ENCODE measurements at regions of chr1 and their contacts with region 1.

Region 1: GRCh38 chr1:2545759-2546514 is 10.2 kb upstream of the TNFRSF14 start:
- DNase-seq: peak; percentile 80
- ATAC-seq: peak; percentile 61
- H3K4me3 ChIP-seq: peak overlapping the region; percentile 82; the same call in 1 of the 2 replicates
- H3K27ac ChIP-seq: peak overlapping the region; percentile 96
- H3K4me1 ChIP-seq: peaks cover 31% of the 10 kb centered on the region
- H3K27me3 ChIP-seq: no peaks in the 10 kb centered on the region
- CTCF ChIP-seq: no peak
- EP300 ChIP-seq: no peak
- POLR2A ChIP-seq: peak; percentile 96
- RAD21 ChIP-seq: no peak

Region 2: DNA sequence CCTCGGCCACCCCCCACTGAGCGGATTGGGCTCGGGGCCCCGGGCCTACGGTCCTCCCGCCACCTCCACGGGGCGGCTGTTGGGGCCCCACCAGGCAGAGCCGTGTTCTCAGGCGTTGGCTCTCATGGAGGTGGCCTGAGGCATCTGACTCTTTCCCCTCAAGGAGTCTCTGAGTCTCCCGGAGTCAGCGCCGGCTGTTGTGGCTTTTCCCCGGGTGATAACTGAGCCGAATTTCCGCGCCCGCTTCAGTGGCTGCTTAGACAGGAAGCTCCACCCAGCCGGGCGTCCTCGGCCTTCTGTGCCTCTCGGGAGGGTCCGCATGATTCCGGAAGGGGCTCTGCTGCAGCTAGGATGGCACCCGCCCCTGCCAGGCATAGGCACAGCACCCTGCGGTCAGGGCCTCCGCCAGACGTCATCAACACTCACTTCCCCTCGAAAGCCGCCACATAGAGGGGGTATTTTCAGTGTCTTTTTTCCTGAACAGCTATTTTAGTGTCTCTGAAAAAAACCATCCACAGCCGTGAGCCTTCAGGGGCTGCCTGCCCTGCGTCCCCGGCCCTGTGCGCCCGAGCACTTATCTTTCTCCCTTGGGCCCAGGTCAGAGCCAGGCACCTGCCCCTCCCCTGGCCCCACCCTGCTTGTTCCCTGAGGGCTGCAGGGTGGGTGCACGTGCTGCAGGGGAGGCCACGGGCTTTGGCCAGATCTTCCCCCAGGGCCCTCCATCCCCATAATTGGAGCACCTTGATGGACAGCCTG is 244.9 kb before region 1 on chr1:
- CTCF ChIA-PET with region 1: no interaction called
- POLR2A ChIA-PET with region 1: no interaction called
- RAD21 ChIA-PET with region 1: interaction called, 3 read pairs
- SMC1A ChIA-PET with region 1: no interaction called
- in situ Hi-C with region 1: no loop called
- intact Hi-C with region 1: loop called (anchors 10 kb)
- DNase-seq: peak; percentile 76
- ATAC-seq: peak; percentile 89
- H3K4me3 ChIP-seq: peak overlapping the region; percentile 71
- H3K27ac ChIP-seq: peak overlapping the region; percentile 91
- H3K4me1 ChIP-seq: peaks cover 28% of the 10 kb centered on the region
- H3K27me3 ChIP-seq: no peaks in the 10 kb centered on the region
- CTCF ChIP-seq: no peak
- EP300 ChIP-seq: peak; percentile 81 to 84; a peak in 3 of 4 replicates
- POLR2A ChIP-seq: peak; percentile 47; the same call in 1 of the 2 replicates
- RAD21 ChIP-seq: no peak

Region 3: GRCh38 chr1:2412519-2413233 is 133.3 kb before region 1 on chr1 and contains the start of gene PEX10:
- CTCF ChIA-PET with region 1: interaction called, 37 read pairs
- POLR2A ChIA-PET with region 1: interaction called, 18 read pairs
- RAD21 ChIA-PET with region 1: interaction called, 46 read pairs
- SMC1A ChIA-PET with region 1: interaction called, 21 read pairs
- in situ Hi-C with region 1: loop called (anchors 5 kb)
- intact Hi-C with region 1: loop called (anchors 1 kb)
- DNase-seq: peak; percentile 80
- ATAC-seq: peak; percentile 88
- H3K4me3 ChIP-seq: peak within 1 kb of the TSS; percentile 98
- H3K27ac ChIP-seq: peak within 1 kb of the TSS; percentile 62
- H3K4me1 ChIP-seq: peaks cover 27% of the 10 kb centered on the region
- H3K27me3 ChIP-seq: no peaks in the 10 kb centered on the region
- CTCF ChIP-seq: no peak
- EP300 ChIP-seq: no peak
- POLR2A ChIP-seq: peak; percentile 87
- RAD21 ChIP-seq: no peak
- polyA plus RNA-seq, gene PEX10: 0.24 TPM in 1 of 2 experiments, not detected in the other

Region 4: GRCh38 chr1:2556277-2556677 is 10.3 kb after region 1 on chr1 and contains the start of gene TNFRSF14:
- CTCF ChIA-PET with region 1: interaction called, 8 read pairs
- POLR2A ChIA-PET with region 1: interaction called, 23 read pairs
- RAD21 ChIA-PET with region 1: interaction called, 20 read pairs
- SMC1A ChIA-PET with region 1: interaction called, 7 read pairs
- in situ Hi-C with region 1: no loop called
- intact Hi-C with region 1: no loop called
- DNase-seq: no peak
- ATAC-seq: peak; percentile 73
- H3K4me3 ChIP-seq: peak within 1 kb of the TSS; percentile 87
- H3K27ac ChIP-seq: peak within 1 kb of the TSS; percentile 99
- H3K4me1 ChIP-seq: peaks cover 25% of the 10 kb centered on the region
- H3K27me3 ChIP-seq: no peaks in the 10 kb centered on the region
- CTCF ChIP-seq: peak in 2 of 3 experiments; percentile 12 to 13; a peak in 2 of 6 replicates
- EP300 ChIP-seq: no peak; a peak in 1 of 4 replicates
- POLR2A ChIP-seq: peak; percentile 77
- RAD21 ChIP-seq: no peak
- polyA plus RNA-seq, gene TNFRSF14: 0.43 to 2.9 TPM

Region 5: GRCh38 chr1:2586154-2587070 is 40.5 kb after region 1 on chr1 and contains the start of gene PRXL2B:
- CTCF ChIA-PET with region 1: interaction called, 33 read pairs
- POLR2A ChIA-PET with region 1: interaction called, 56 read pairs
- RAD21 ChIA-PET with region 1: interaction called, 54 read pairs
- SMC1A ChIA-PET with region 1: interaction called, 30 read pairs
- in situ Hi-C with region 1: loop called (anchors 5 kb)
- intact Hi-C with region 1: loop called (anchors 2 kb)
- DNase-seq: peak; percentile 83
- ATAC-seq: peak; percentile 91
- H3K4me3 ChIP-seq: peak within 1 kb of the TSS; percentile 81
- H3K27ac ChIP-seq: peak within 1 kb of the TSS; percentile 97
- H3K4me1 ChIP-seq: peaks cover 24% of the 10 kb centered on the region
- H3K27me3 ChIP-seq: no peaks in the 10 kb centered on the region
- CTCF ChIP-seq: no peak
- EP300 ChIP-seq: no peak
- POLR2A ChIP-seq: peak; percentile 82
- RAD21 ChIP-seq: no peak
- polyA plus RNA-seq, gene PRXL2B: 0.44 to 0.53 TPM

Measured in GM12878 (cell line).